Right cardiac atrium (tissue), 5 donors: ENCODE measurements at regions of chr21 and their contacts with region 1.

Region 1: GRCh38 chr21:24895885-24896734 is 711.2 kb downstream of the MRPL39 start:
- DNase-seq: no peak
- ATAC-seq: no peak
- H3K4me3 ChIP-seq: no peak overlapping the region
- H3K27ac ChIP-seq: no peak overlapping the region
- H3K4me1 ChIP-seq: no peaks in the 10 kb centered on the region
- H3K27me3 ChIP-seq: no peaks in the 10 kb centered on the region

Region 2: DNA sequence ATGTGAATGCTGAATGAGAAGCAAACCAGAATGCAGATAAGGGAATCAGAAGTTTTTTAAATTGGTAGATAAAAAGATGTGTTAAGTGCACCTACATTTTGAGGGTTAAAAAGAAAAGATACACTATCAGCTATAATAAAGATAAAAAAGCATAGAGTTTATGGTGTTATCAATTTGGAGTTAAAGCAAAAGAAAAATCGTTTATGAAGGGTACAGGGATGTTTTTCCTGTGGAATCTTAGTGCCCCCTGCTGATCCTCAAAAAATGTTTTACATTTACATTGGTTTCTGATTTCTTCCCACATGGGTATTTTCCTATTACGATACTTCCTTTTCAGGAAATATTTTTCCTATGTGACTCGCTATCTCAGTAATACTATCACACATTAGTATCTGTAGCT is 417.7 kb after region 1 on chr21:
- intact Hi-C with region 1: loop called (anchors 5 to 10 kb)
- DNase-seq: no peak
- ATAC-seq: no peak
- H3K4me3 ChIP-seq: no peak overlapping the region
- H3K27ac ChIP-seq: no peak overlapping the region
- H3K4me1 ChIP-seq: no peaks in the 10 kb centered on the region
- H3K27me3 ChIP-seq: no peaks in the 10 kb centered on the region

Region 3: GRCh38 chr21:25385911-25386474 is 489.9 kb after region 1 on chr21:
- intact Hi-C with region 1: loop called in 2 of 4 experiments (anchors 10 kb)
- DNase-seq: peak in 1 of 3 donors; percentile 44
- ATAC-seq: peak in 1 of 2 donors; percentile 41
- H3K4me3 ChIP-seq: no peak overlapping the region
- H3K27ac ChIP-seq: no peak overlapping the region
- H3K4me1 ChIP-seq: no peaks in the 10 kb centered on the region
- H3K27me3 ChIP-seq: no peaks in the 10 kb centered on the region